ENCODE measurements at regions of chr10 and their contacts with region 1.

Region 1: DNA sequence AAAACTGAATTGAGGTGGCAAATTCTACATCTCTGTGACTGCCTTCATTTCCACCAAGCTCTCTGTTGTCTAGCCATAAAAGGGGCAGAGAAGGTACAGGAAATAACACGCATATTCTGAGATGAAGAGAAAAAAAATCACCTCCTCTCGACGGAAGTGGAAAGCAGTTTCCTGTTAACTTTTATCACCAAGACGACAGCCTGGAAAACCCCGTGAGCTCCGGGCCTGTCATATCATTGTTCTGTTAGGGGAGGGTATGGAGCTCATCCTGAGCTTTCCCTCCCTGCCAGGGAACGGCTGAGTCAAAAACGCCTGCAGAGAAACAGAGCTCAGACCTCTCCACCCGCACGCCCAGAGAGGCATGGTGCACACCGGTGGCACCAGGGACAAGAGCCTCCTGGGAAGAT is 200.3 kb downstream of the PRPF18 start:
- DNase-seq: peak; percentile 87
- ATAC-seq: peak; percentile 87
- H3K4me3 Mint-ChIP-seq: peak overlapping the region; percentile 32
- H3K27ac Mint-ChIP-seq: peak overlapping the region; percentile 90
- H3K4me1 Mint-ChIP-seq: peaks cover 22% of the 10 kb centered on the region
- H3K27me3 Mint-ChIP-seq: no peaks in the 10 kb centered on the region

Region 2: GRCh38 chr10:13348216-13349017 is 438.6 kb before region 1 on chr10 and contains the start of gene SEPHS1:
- CTCF ChIA-PET with region 1: no interaction called
- POLR2A ChIA-PET with region 1: no interaction called
- intact Hi-C with region 1: loop called in 1 of 2 experiments (anchors 1 kb)
- DNase-seq: peak; percentile 93
- ATAC-seq: peak; percentile 77
- H3K4me3 Mint-ChIP-seq: peak within 1 kb of the TSS; percentile 87
- H3K27ac Mint-ChIP-seq: peak within 1 kb of the TSS; percentile 95
- H3K4me1 Mint-ChIP-seq: peaks cover 57% of the 10 kb centered on the region
- H3K27me3 Mint-ChIP-seq: no peaks in the 10 kb centered on the region
- total RNA-seq, gene SEPHS1: 74.5 to 74.7 TPM

Region 3: DNA sequence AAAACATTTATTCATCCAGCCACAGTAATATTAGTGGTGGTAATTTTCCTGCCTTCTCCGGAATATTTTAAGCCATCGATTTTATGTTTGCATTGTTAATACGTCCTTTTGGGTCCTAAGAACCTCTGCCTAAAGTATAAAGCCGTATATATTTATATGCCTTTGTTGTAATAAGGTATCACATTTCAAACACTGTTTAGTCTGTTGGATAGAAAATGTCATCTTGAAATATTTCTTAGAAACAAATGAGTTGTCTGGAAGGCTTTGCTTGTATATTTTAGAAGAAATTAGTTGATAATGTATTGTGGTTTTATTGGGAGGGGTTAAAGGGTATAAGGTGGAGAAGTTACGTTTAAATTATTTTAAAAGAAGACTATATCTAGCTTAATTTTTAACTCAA is 189.1 kb before region 1 on chr10:
- CTCF ChIA-PET with region 1: no interaction called
- POLR2A ChIA-PET with region 1: no interaction called
- intact Hi-C with region 1: no loop called
- DNase-seq: no peak
- ATAC-seq: no peak
- H3K4me3 Mint-ChIP-seq: no peak overlapping the region
- H3K27ac Mint-ChIP-seq: no peak overlapping the region
- H3K4me1 Mint-ChIP-seq: peaks cover 4% of the 10 kb centered on the region
- H3K27me3 Mint-ChIP-seq: no peaks in the 10 kb centered on the region

Region 4: GRCh38 chr10:13690281-13690825 is 96.7 kb before region 1 on chr10:
- CTCF ChIA-PET with region 1: no interaction called
- POLR2A ChIA-PET with region 1: no interaction called
- intact Hi-C with region 1: no loop called
- DNase-seq: peak; percentile 34
- ATAC-seq: peak; percentile 74
- H3K4me3 Mint-ChIP-seq: no peak overlapping the region
- H3K27ac Mint-ChIP-seq: no peak overlapping the region
- H3K4me1 Mint-ChIP-seq: no peaks in the 10 kb centered on the region
- H3K27me3 Mint-ChIP-seq: no peaks in the 10 kb centered on the region

Region 5: DNA sequence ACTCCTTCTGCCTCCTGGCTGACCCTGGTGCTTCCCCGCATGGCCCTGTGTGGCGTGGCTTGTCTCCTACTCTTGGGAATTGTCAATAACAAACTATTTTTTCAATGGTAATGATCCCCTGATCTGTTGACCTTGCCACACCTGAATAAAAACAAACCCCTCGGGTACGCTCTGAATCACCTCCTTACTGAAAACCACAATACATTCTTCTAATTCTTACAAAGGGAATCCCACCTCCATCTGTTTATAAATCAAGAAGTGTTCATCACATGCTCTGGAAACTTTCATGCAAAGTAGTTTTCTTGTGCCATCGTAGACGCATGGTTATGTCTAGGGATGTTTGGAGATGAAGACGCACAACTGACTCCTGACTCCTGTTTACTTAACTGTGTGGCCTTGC is 297.9 kb after region 1 on chr10:
- CTCF ChIA-PET with region 1: no interaction called
- POLR2A ChIA-PET with region 1: no interaction called
- intact Hi-C with region 1: loop called (anchors 5 to 10 kb)
- DNase-seq: no peak
- ATAC-seq: no peak
- H3K4me3 Mint-ChIP-seq: no peak overlapping the region
- H3K27ac Mint-ChIP-seq: no peak overlapping the region
- H3K4me1 Mint-ChIP-seq: no peaks in the 10 kb centered on the region
- H3K27me3 Mint-ChIP-seq: no peaks in the 10 kb centered on the region

Region 6: GRCh38 chr10:14385596-14386593 is 598.9 kb after region 1 on chr10:
- CTCF ChIA-PET with region 1: no interaction called
- POLR2A ChIA-PET with region 1: no interaction called
- intact Hi-C with region 1: loop called in 1 of 2 experiments (anchors 2 kb)
- DNase-seq: peak; percentile 78
- ATAC-seq: peak; percentile 74
- H3K4me3 Mint-ChIP-seq: no peak overlapping the region
- H3K27ac Mint-ChIP-seq: no peak overlapping the region
- H3K4me1 Mint-ChIP-seq: peaks cover 74% of the 10 kb centered on the region
- H3K27me3 Mint-ChIP-seq: peaks cover 13% of the 10 kb centered on the region

Region 7: GRCh38 chr10:14611968-14612693 is 825.1 kb after region 1 on chr10:
- CTCF ChIA-PET with region 1: no interaction called
- POLR2A ChIA-PET with region 1: interaction called, 10 read pairs
- intact Hi-C with region 1: no loop called
- DNase-seq: no peak
- ATAC-seq: no peak
- H3K4me3 Mint-ChIP-seq: no peak overlapping the region
- H3K27ac Mint-ChIP-seq: no peak overlapping the region
- H3K4me1 Mint-ChIP-seq: peaks cover 36% of the 10 kb centered on the region
- H3K27me3 Mint-ChIP-seq: no peaks in the 10 kb centered on the region

Measured in activated CD4-positive, alpha-beta T cell treated with anti-CD3 and anti-CD28 coated beads for 36 hours (primary cell).